Activated CD4-positive, alpha-beta T cell treated with anti-CD3 and anti-CD28 coated beads for 36 hours (primary cell): ENCODE measurements at regions of chr15 and their contacts with region 1.

Region 1: GRCh38 chr15:92917606-92918407 is 17.7 kb downstream of the CHD2 start:
- DNase-seq: peak; percentile 96
- ATAC-seq: peak; percentile 10
- H3K4me3 Mint-ChIP-seq: peak overlapping the region; percentile 20
- H3K27ac Mint-ChIP-seq: peak overlapping the region; percentile 84
- H3K4me1 Mint-ChIP-seq: peaks cover 86% of the 10 kb centered on the region
- H3K27me3 Mint-ChIP-seq: no peaks in the 10 kb centered on the region

Region 2: DNA sequence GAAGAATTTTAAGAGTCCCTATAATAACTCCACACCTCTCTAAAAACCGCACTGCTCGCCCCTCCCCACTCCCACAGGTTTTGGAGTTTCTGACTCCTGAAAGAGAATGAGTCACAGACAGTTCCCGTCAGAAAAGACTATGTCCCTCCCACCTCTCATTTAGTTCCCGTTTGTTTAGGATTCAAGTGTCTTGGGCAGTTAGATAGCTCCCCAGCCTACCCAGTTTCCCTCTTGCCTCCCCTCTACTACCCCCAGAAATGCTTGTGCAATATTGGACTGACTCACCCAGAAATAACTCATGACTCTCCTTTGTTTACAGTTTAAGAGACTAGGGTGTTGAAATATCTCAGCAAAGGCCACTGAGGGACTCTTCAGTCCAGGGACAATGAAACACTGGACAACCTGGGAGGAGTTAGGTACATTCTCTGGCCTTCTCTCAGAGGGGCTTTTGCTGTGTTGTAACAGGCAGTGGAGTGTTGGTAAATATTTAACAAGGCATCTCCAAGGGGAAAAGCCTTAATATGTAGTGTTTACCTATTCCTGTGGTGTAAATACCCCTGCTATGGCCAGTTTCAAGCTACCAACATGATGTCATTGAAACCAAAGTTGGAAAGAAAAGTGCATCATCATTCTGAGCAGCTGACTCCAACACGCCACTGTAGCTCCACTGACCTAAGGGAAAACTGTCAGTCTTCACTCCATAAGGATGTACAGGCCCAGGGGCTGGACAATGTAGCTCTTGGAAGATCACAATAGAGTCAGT is 113.8 kb before region 1 on chr15:
- CTCF ChIA-PET with region 1: interaction called, 87 read pairs
- POLR2A ChIA-PET with region 1: interaction called, 12 read pairs
- intact Hi-C with region 1: loop called (anchors 1 kb)
- DNase-seq: peak; percentile 91
- ATAC-seq: peak; percentile 86
- H3K4me3 Mint-ChIP-seq: peak overlapping the region; percentile 17
- H3K27ac Mint-ChIP-seq: peak overlapping the region; percentile 94
- H3K4me1 Mint-ChIP-seq: peaks cover 36% of the 10 kb centered on the region
- H3K27me3 Mint-ChIP-seq: no peaks in the 10 kb centered on the region

Region 3: GRCh38 chr15:92831655-92832328 is 86.0 kb before region 1 on chr15:
- CTCF ChIA-PET with region 1: interaction called, 6 read pairs
- POLR2A ChIA-PET with region 1: no interaction called
- intact Hi-C with region 1: loop called in 1 of 2 experiments (anchors 1 kb)
- DNase-seq: peak; percentile 96
- ATAC-seq: peak; percentile 95
- H3K4me3 Mint-ChIP-seq: peak overlapping the region; percentile 65
- H3K27ac Mint-ChIP-seq: peak overlapping the region; percentile 96
- H3K4me1 Mint-ChIP-seq: peaks cover 58% of the 10 kb centered on the region
- H3K27me3 Mint-ChIP-seq: no peaks in the 10 kb centered on the region

Region 4: DNA sequence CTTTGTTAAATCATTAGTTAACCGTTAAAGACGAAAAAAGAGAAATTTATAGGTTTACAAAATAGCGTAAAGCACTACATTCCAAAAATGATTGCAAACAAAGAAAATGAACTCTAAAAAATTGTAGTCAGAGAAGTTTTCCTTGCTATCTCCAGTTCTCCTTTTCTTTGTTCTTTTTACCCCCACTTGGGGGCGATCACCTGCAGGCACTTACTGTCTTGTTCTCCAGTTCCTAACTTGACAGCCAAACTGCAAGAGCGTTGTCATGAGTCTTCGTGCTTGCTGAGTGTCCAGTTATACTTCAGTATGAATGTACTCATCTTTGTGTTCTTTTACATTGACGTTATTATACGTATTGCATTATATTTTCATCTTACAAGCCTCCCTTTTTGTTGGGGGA is 36.8 kb after region 1 on chr15:
- CTCF ChIA-PET with region 1: interaction called, 5 read pairs
- POLR2A ChIA-PET with region 1: no interaction called
- intact Hi-C with region 1: loop called in 1 of 2 experiments (anchors 2 kb)
- DNase-seq: peak; percentile 28
- ATAC-seq: no peak
- H3K4me3 Mint-ChIP-seq: no peak overlapping the region
- H3K27ac Mint-ChIP-seq: no peak overlapping the region
- H3K4me1 Mint-ChIP-seq: peaks cover 33% of the 10 kb centered on the region
- H3K27me3 Mint-ChIP-seq: no peaks in the 10 kb centered on the region

Region 5: GRCh38 chr15:93048759-93049161 is 131.0 kb after region 1 on chr15:
- CTCF ChIA-PET with region 1: no interaction called
- POLR2A ChIA-PET with region 1: no interaction called
- intact Hi-C with region 1: no loop called
- DNase-seq: no peak
- ATAC-seq: no peak
- H3K4me3 Mint-ChIP-seq: no peak overlapping the region
- H3K27ac Mint-ChIP-seq: no peak overlapping the region
- H3K4me1 Mint-ChIP-seq: peaks cover 9% of the 10 kb centered on the region
- H3K27me3 Mint-ChIP-seq: no peaks in the 10 kb centered on the region